AG04450 (cell line): ENCODE measurements at regions of chr11 and their contacts with region 1.

Region 1: GRCh38 chr11:128905345-128906184 is 14.4 kb downstream of the KCNJ5 start:
- DNase-seq: no peak
- H3K4me3 ChIP-seq: peak overlapping the region; percentile 60
- H3K27ac ChIP-seq: no peak overlapping the region
- H3K27me3 ChIP-seq: peaks cover 6% of the 10 kb centered on the region
- CTCF ChIP-seq: peak; percentile 49

Region 2: DNA sequence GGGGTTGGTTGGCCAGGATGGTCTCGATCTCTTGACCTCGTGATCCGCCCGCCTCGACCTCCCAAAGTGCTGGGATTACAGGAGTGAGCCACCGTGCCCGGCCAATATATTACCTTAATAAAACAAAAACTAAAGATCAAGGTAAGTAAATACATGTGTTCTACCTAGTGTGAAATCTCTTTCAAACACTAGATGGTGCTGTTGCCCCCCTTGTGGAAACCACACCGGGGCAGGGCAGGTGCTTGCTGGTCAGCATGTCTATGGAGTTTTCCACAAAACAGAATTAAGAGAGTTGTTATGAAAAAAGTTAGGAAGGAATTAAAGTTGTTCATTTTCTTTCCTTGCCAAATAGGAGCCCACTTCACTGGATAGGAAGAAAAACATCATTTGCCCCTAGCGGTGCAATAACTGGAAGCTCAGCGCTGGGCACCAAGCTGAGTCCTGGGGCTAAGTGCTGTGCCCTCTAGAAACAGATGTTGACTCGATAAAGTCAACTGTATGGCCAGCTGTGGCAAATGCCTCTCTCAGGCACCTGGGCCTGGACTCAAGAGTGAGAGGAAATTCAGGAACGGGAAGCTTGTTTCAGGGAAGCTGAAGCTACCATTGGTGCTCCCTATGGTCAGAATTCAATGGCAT is 20.7 kb before region 1 on chr11:
- CTCF ChIA-PET with region 1: interaction called, 27 read pairs
- POLR2A ChIA-PET with region 1: no interaction called
- DNase-seq: peak; percentile 33
- H3K4me3 ChIP-seq: no peak overlapping the region
- H3K27ac ChIP-seq: no peak overlapping the region
- H3K27me3 ChIP-seq: peaks cover 59% of the 10 kb centered on the region
- CTCF ChIP-seq: peak; percentile 84

Region 3: DNA sequence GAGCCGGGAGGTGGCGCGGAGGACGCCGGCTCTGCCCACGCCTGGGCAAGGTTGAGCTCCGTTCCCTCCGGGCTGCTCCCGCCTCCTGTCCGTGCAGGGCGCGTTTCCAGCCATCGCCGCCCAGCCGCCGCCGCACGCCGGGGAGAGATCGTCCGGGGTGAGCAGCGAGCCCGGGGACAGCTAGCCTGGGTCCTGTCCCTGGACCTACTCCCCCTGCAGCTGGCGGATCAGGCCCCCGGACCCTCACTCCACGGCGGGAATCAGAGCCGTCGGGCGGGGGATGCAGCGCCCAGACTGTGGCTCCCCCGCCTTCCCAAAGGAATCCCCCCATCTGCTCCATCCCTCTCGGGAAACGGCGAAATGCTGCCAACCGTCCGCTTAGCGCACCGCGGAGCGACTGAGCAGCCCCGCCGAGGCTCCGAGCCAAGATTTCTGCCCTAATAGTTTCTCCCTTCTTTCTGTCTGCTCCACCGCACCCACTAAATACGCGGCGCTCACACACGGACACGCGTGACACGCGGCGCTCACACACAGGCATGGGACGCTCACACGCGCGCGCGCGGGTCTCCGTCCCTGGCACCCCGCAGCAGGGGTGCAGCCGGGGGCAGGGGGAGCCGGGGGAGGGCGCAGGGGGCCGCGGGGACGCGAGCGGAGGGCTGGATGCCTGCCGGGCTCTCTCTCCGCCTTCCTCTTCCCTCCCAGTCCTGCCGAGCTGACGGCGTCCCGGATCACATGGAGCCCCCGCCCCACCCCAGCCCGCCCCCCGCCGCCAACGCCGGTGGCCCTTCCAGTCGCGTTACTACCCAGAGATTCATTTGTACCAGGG is 14.8 kb before region 1 on chr11 and contains the start of gene KCNJ5:
- CTCF ChIA-PET with region 1: interaction called, 27 read pairs
- POLR2A ChIA-PET with region 1: no interaction called
- DNase-seq: no peak
- H3K4me3 ChIP-seq: peak within 1 kb of the TSS; percentile 57
- H3K27ac ChIP-seq: peak within 1 kb of the TSS; percentile 11
- H3K27me3 ChIP-seq: peaks cover 62% of the 10 kb centered on the region
- CTCF ChIP-seq: no peak
- polyA plus RNA-seq, gene KCNJ5: not detected in 2 replicates

Region 4: GRCh38 chr11:128928400-128928799 is 22.8 kb after region 1 on chr11:
- CTCF ChIA-PET with region 1: interaction called, 13 read pairs
- POLR2A ChIA-PET with region 1: no interaction called
- DNase-seq: no peak
- H3K4me3 ChIP-seq: no peak overlapping the region
- H3K27ac ChIP-seq: no peak overlapping the region
- H3K27me3 ChIP-seq: peaks cover 21% of the 10 kb centered on the region
- CTCF ChIP-seq: no peak